Heart right ventricle (tissue), 16 donors: ENCODE measurements at regions of chr11 and their contacts with region 1.

Region 1: DNA sequence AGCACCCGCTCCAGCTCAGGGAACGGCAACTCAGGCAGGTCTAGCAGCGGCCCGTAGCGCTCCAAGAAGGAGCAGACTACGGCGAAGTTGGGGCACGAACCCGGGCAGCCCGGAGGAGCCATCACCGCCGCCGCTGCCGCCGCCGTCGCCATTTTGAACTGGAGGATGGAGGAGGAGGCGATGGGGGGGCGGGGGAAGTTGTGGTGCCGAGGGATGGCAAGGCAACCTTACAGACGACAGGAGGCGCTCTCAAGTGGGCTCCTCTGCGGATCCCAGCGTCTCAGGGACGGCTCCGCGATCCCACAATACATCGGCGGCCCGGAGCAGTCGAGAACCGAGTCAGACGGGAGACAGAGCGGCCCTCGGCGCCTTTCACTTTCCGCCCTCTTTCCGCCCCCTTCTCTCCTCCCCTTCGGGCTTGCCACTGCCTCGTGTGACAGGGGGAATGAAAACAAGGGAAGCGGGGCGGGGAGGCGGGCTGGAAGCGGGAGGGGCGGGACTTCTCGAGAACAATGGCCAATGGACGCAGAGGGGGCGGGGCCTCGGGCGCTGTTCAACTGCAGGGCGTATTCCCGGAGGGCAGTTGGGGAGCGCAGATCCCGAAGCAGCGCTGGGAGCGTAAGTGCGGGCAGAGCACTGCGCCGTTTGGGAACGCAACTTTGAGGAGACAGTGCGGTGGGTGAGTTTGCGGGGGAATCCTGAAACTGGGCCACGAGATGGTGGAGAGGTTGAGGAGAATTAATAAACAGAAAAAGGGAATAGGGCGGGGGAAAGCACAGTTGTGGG is at the starts of genes AAMDC and RSF1:
- DNase-seq: peak; percentile 99
- ATAC-seq: peak; percentile 94 to 96 (median 95)
- H3K4me3 ChIP-seq: peak within 1 kb of the TSS; percentile 71 to 100 (median 97)
- H3K27ac ChIP-seq: peak within 1 kb of the TSS; percentile 82 to 98 (median 97)
- H3K4me1 ChIP-seq: peaks cover 7 to 68% (median 56%) of the 10 kb centered on the region in 9 donors
- H3K27me3 ChIP-seq: no peaks in the 10 kb centered on the region
- CTCF ChIP-seq: peak; percentile 32 to 91 (median 81)
- total RNA-seq, gene AAMDC: 52.4 to 146 (median 84.7) TPM
- total RNA-seq, gene RSF1: 31.1 to 55.9 (median 43.8) TPM

Region 2: DNA sequence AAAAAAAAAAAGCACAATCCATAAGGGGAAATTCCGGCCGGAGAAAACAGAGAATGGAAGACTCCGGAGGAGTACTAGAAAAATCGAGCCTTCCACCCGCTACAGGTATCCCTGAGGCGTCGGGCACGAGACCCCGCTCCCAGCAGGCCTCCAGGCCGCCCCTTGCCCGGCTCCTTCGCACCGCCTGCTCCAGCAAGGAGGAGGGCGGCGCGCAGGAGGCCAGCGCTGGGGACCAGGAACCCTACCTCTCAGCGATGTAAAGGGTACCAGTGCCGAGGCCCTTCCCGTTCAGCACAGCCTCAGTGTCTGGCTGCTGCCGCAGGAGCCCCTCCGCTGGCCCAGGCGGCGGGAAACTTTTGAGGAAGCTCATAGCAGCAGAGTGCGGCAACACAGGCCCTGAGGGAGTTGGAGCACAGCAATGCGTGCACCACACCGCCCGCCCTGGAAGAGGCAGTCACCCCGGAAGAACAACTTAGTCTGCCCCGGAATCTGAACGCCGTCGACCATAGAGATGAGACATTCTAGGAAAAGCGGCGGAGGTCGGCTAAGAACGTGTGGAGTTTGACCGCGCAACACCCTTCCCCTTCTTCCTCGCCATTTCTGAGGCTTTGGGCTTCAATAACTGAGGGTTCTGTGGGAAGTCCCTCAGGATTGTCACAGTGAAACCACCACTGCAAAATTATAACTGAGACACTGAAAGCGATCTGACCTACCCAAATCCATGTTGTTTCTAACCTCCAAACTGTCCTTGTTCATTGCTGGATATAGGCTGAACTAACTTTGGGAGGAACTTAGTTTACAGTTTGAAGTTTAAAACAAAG is 183.2 kb before region 1 on chr11 and contains the start of gene CLNS1A:
- intact Hi-C with region 1: loop called in 2 of 10 experiments (anchors 1 to 5 kb)
- DNase-seq: peak; percentile 81 to 89
- ATAC-seq: peak; percentile 95 to 100 (median 99)
- H3K4me3 ChIP-seq: peak within 1 kb of the TSS; percentile 51 to 99 (median 90)
- H3K27ac ChIP-seq: peak within 1 kb of the TSS; percentile 67 to 94 (median 84)
- H3K4me1 ChIP-seq: peaks cover 3 to 43% (median 18%) of the 10 kb centered on the region in 9 donors
- H3K27me3 ChIP-seq: no peaks in the 10 kb centered on the region
- CTCF ChIP-seq: peak in 2 of 9 donors; percentile 5 to 8
- total RNA-seq, gene CLNS1A: 66.2 to 85.9 (median 77.3) TPM

Region 3: GRCh38 chr11:77695417-77695816 is 125.3 kb before region 1 on chr11:
- intact Hi-C with region 1: loop called in 1 of 10 experiments (anchors 10 kb)
- DNase-seq: no peak
- ATAC-seq: peak in 3 of 8 donors; percentile 35 to 74 (median 46)
- H3K4me3 ChIP-seq: no peak overlapping the region
- H3K27ac ChIP-seq: peak overlapping the region in 5 of 10 donors; percentile 14 to 63 (median 30)
- H3K4me1 ChIP-seq: peaks cover 0 to 10% (median 0%) of the 10 kb centered on the region in 9 donors
- H3K27me3 ChIP-seq: no peaks in the 10 kb centered on the region
- CTCF ChIP-seq: no peak

Region 4: DNA sequence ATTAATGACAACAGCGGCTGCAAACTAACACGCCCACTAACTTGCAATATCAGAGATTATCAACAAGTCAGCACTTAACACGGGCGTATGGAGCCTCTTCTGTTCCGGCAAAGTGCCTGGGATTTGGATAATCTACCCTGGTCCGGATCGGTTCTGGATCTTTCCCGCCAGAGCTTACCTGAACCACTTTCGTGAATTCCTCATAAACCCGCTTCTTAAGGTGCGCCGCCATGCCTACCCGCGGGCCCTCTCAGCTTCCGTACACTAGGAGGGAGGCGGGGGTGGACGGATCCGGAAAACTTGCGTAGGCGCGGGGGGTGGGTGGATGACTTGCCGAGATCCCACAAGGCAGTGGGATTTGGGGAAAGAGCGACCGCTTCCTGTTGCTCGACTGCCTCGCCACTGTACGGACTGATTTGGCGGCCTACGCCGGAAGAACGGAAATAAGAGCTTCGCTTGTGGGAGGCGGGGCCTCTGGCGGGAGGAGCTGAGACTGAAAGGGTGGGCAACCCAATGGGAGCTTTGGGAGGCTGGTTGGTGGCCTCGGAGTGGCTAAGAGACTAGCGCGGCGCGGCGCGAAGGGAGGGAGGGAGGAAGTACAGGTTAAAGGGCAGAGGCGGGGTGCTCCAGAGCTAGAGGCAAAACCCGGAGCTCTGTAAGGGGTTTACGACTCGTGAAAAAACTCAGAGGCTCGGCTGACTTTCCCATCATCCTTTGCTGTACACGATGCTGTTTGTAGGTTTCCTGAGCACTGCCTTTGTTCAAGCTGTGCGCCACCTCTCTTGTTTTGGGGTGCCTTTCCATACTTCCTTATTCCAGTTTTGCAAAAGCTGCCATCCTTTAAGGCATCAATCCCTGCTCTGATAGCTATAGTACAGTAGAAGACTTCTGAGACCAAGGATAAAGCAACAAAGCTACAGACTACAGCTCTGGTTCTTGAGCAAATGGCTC is 173.9 kb after region 1 on chr11 and contains the start of gene INTS4:
- intact Hi-C with region 1: loop called in 8 of 10 experiments (anchors 1 to 10 kb)
- DNase-seq: peak; percentile 99
- ATAC-seq: peak; percentile 98 to 99 (median 99)
- H3K4me3 ChIP-seq: peak within 1 kb of the TSS; percentile 52 to 79 (median 72)
- H3K27ac ChIP-seq: peak within 1 kb of the TSS in 9 of 10 donors; percentile 60 to 91 (median 86)
- H3K4me1 ChIP-seq: peaks cover 6 to 30% (median 21%) of the 10 kb centered on the region in 9 donors
- H3K27me3 ChIP-seq: no peaks in the 10 kb centered on the region
- CTCF ChIP-seq: no peak
- total RNA-seq, gene INTS4: 12.2 to 20.2 (median 16.8) TPM